A673 (cell line): ENCODE measurements at regions of chr15 and their contacts with region 1.

Region 1: GRCh38 chr15:73697033-73697467 is 12.9 kb downstream of the CD276 start:
- DNase-seq: peak; percentile 98
- H3K4me3 ChIP-seq: no peak overlapping the region
- H3K27ac ChIP-seq: peak overlapping the region; percentile 70
- H3K4me1 ChIP-seq: peaks cover 28% of the 10 kb centered on the region
- H3K27me3 ChIP-seq: no peaks in the 10 kb centered on the region
- CTCF ChIP-seq: no peak

Region 2: DNA sequence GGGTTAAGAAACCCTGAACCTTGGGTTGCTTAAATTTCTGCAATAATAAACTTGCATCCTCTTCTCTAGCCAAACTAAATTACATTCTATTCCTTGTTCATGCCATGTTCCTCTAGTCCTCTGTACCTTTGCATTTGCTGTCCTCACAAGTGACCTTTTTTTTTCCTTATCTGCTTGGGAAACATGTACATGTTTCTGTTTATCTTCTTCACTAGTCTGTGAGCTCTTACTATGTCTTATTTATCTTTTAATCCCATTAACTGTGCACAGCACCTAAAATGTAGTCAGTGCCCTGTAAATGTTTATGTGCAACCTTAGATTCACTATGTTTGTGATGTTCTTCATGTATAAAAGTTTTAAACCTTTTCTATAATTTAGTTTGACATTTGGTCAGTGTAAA is 192.2 kb before region 1 on chr15:
- CTCF ChIA-PET with region 1: no interaction called
- POLR2A ChIA-PET with region 1: no interaction called
- intact Hi-C with region 1: no loop called
- DNase-seq: no peak
- H3K4me3 ChIP-seq: no peak overlapping the region
- H3K27ac ChIP-seq: no peak overlapping the region
- H3K4me1 ChIP-seq: no peaks in the 10 kb centered on the region
- H3K27me3 ChIP-seq: peaks cover 16% of the 10 kb centered on the region
- CTCF ChIP-seq: no peak

Region 3: GRCh38 chr15:73560501-73561117 is 136.4 kb before region 1 on chr15:
- CTCF ChIA-PET with region 1: interaction called, 11 read pairs
- POLR2A ChIA-PET with region 1: no interaction called
- intact Hi-C with region 1: loop called (anchors 2 kb)
- DNase-seq: peak; percentile 83
- H3K4me3 ChIP-seq: no peak overlapping the region
- H3K27ac ChIP-seq: no peak overlapping the region
- H3K4me1 ChIP-seq: peaks cover 8% of the 10 kb centered on the region
- H3K27me3 ChIP-seq: no peaks in the 10 kb centered on the region
- CTCF ChIP-seq: peak; percentile 61

Region 4: GRCh38 chr15:73573572-73573971 is 123.5 kb before region 1 on chr15:
- CTCF ChIA-PET with region 1: no interaction called
- POLR2A ChIA-PET with region 1: no interaction called
- intact Hi-C with region 1: no loop called
- DNase-seq: peak; percentile 67
- H3K4me3 ChIP-seq: no peak overlapping the region
- H3K27ac ChIP-seq: peak overlapping the region; percentile 48
- H3K4me1 ChIP-seq: peaks cover 20% of the 10 kb centered on the region
- H3K27me3 ChIP-seq: no peaks in the 10 kb centered on the region
- CTCF ChIP-seq: no peak

Region 5: GRCh38 chr15:73677146-73677607 is 19.9 kb before region 1 on chr15:
- CTCF ChIA-PET with region 1: interaction called, 38 read pairs
- POLR2A ChIA-PET with region 1: no interaction called
- intact Hi-C with region 1: loop called (anchors 1 kb)
- DNase-seq: peak; percentile 70
- H3K4me3 ChIP-seq: no peak overlapping the region
- H3K27ac ChIP-seq: no peak overlapping the region
- H3K4me1 ChIP-seq: no peaks in the 10 kb centered on the region
- H3K27me3 ChIP-seq: no peaks in the 10 kb centered on the region
- CTCF ChIP-seq: peak; percentile 86

Region 6: DNA sequence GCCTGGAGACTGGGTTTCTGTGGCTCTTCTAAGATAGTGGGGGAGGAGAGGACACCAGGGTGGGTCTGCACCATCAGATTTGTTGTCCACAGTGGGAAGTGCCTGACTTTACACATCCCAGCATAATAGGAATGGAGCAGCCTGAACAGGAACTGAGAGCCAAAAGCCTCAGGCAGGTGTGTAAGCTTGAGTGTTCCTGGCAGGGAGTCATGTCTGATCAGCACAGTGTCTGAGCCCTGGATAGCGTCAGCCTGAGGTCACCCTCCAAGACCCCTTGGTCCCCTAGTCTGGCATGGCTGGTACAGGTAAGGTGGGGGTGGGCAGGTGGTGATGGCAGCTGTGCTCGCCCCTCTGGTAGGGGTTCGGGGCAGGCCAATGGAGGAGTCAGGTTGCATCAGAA is 35.9 kb after region 1 on chr15:
- CTCF ChIA-PET with region 1: interaction called, 11 read pairs
- POLR2A ChIA-PET with region 1: no interaction called
- intact Hi-C with region 1: no loop called
- DNase-seq: no peak
- H3K4me3 ChIP-seq: no peak overlapping the region
- H3K27ac ChIP-seq: no peak overlapping the region
- H3K4me1 ChIP-seq: no peaks in the 10 kb centered on the region
- H3K27me3 ChIP-seq: no peaks in the 10 kb centered on the region
- CTCF ChIP-seq: no peak